Breast epithelium (tissue), 4 donors: ENCODE measurements at regions of chr6 and their contacts with region 1.

Region 1: DNA sequence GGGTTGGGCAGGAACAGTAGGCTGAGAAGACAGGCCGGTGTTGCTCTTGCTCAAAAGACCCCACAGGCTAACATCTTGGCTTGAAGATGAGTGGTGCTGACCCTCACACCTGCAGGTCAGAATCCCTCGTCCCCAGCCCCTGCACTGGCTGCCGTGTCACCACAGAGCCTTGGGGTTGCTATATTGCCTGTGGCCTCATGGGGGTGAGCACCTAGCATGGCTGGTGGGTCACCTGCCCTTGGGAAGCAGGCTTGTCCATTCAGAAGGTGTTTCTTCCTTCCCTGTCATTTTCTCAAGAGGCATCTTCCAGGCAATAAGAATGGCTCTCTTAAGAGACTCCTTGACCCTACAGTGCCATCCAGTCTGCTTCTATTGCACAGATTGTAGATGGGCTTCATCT is 7.7 kb downstream of the SLC22A16 start:
- DNase-seq: no peak
- H3K4me3 ChIP-seq: no peak overlapping the region
- H3K27ac ChIP-seq: no peak overlapping the region
- H3K4me1 ChIP-seq: no peaks in the 10 kb centered on the region
- H3K27me3 ChIP-seq: no peaks in the 10 kb centered on the region
- CTCF ChIP-seq: no peak
- POLR2A ChIP-seq: no peak

Region 2: GRCh38 chr6:110322874-110323242 is 145.9 kb before region 1 on chr6:
- intact Hi-C with region 1: loop called (anchors 5 kb)
- DNase-seq: no peak
- H3K4me3 ChIP-seq: no peak overlapping the region
- H3K27ac ChIP-seq: peak overlapping the region in 1 of 2 donors; percentile 53
- H3K4me1 ChIP-seq: no peaks in the 10 kb centered on the region
- H3K27me3 ChIP-seq: no peaks in the 10 kb centered on the region
- CTCF ChIP-seq: no peak
- POLR2A ChIP-seq: no peak